Gastrocnemius medialis (tissue), 4 donors: ENCODE measurements at regions of chr6 and their contacts with region 1.

Region 1: GRCh38 chr6:41735427-41736356 is at the start of gene TFEB:
- DNase-seq: peak; percentile 92 to 93
- ATAC-seq: peak; percentile 43 to 51
- H3K4me3 ChIP-seq: peak within 1 kb of the TSS; percentile 76 to 97 (median 90)
- H3K27ac ChIP-seq: peak within 1 kb of the TSS; percentile 97 to 99 (median 98)
- H3K4me1 ChIP-seq: peaks cover 12 to 19% of the 10 kb centered on the region in 2 donors
- H3K27me3 ChIP-seq: no peaks in the 10 kb centered on the region
- CTCF ChIP-seq: peak; percentile 91 to 100 (median 100)
- POLR2A ChIP-seq: peak; percentile 94 to 97
- total RNA-seq, gene TFEB: 82.8 to 121 (median 93.3) TPM

Region 2: DNA sequence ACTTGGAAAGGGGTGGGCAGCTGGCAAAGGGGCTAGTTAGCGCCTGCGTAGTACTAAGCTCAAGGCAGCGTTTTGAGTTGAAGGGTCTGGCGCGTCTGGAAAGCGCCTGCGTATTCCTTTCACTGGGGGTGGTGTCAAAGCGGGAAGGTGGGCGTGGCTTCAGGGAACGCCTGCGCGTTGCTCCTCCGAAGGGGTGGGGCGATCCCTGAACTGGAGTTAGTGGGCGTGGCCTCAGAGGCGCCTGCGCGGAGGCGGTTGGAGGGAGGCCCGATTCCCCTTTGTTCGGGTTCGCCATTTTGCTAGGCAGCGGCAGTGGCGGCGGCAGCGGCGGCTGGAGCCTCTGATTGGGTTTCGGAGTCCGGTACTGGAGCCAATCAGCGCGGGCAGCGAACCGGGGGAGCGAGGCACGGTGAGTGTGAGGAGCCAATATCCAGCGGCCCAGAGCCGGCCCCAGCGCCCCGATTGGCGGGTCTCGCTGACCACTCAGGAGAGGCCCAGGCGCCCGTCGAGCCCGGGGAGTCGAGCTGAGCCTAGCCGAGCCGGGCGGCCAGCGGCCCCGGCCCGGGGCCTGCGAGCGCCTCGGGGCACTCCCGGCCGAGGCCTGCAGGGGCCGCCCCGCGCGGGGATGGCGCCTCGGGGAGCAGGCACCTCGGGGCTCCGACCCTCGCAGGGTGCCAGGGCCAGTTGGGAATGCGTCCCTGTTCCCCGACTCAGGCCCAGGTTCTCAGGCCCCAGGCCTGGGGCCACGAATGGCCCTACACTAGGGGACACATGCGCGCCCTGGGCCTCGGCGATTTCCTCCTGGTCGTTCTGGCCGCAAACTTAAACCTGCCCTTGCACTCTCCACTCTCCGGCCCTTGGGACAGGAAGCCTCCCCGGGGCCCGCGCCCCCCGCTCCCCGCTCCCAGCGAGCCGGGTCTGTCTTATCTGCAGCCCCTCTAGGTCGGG is 662.7 kb before region 1 on chr6 and contains the start of gene NFYA:
- in situ Hi-C with region 1: no loop called
- intact Hi-C with region 1: loop called (anchors 5 kb)
- DNase-seq: peak; percentile 99
- ATAC-seq: peak; percentile 66 to 67
- H3K4me3 ChIP-seq: peak within 1 kb of the TSS; percentile 75 to 93 (median 82)
- H3K27ac ChIP-seq: peak within 1 kb of the TSS; percentile 97 to 99 (median 98)
- H3K4me1 ChIP-seq: peaks cover 34 to 47% of the 10 kb centered on the region in 2 donors
- H3K27me3 ChIP-seq: no peaks in the 10 kb centered on the region
- CTCF ChIP-seq: peak in 4 of 5 experiments; percentile 49 to 82 (median 62)
- POLR2A ChIP-seq: peak; percentile 97 to 98
- total RNA-seq, gene NFYA: 7.2 to 11.6 (median 9.7) TPM

Region 3: DNA sequence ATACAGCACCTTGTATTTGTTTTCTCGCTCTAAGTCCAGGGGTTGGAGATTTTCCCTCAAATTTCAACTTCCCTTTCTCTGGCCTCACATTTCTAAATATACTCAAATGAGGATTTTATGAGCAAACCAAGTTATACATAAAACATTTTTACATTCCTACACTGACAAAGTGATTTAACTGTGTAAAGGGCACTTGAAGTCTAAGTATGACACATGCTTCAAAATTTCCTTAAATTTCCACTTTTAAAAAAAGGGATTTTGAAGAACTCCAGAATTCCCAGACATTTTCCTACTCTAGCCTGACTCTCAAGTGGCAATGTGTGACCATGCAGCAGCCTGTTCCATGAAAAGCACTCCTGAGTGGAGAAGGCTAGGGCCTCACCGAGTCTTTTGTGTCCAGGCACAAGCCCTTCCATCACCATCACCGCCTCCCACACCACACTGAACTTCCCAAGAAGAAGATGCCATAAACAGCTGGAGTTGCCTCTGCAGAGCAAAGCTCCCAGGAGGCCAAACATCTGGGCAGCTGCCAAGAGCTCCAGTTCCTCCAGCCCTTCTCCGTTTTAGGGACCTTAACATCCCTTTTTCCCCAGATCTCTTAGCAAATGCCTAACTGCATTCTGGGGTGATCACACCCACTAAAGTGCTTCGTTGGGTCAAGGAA is 331.4 kb before region 1 on chr6:
- in situ Hi-C with region 1: no loop called
- intact Hi-C with region 1: no loop called
- DNase-seq: no peak
- ATAC-seq: no peak
- H3K4me3 ChIP-seq: no peak overlapping the region
- H3K27ac ChIP-seq: no peak overlapping the region
- H3K4me1 ChIP-seq: no peaks in the 10 kb centered on the region
- H3K27me3 ChIP-seq: peaks cover 3 to 18% (median 11%) of the 10 kb centered on the region in 3 donors
- CTCF ChIP-seq: no peak
- POLR2A ChIP-seq: no peak

Region 4: GRCh38 chr6:41700463-41701347 is 35.0 kb before region 1 on chr6:
- in situ Hi-C with region 1: loop called in 1 of 4 experiments (anchors 5 kb)
- intact Hi-C with region 1: no loop called
- DNase-seq: no peak
- ATAC-seq: no peak
- H3K4me3 ChIP-seq: no peak overlapping the region
- H3K27ac ChIP-seq: peak overlapping the region in 3 of 4 donors; percentile 5 to 32 (median 13)
- H3K4me1 ChIP-seq: peaks cover 59 to 82% of the 10 kb centered on the region in 2 donors
- H3K27me3 ChIP-seq: no peaks in the 10 kb centered on the region
- CTCF ChIP-seq: no peak
- POLR2A ChIP-seq: no peak

Region 5: DNA sequence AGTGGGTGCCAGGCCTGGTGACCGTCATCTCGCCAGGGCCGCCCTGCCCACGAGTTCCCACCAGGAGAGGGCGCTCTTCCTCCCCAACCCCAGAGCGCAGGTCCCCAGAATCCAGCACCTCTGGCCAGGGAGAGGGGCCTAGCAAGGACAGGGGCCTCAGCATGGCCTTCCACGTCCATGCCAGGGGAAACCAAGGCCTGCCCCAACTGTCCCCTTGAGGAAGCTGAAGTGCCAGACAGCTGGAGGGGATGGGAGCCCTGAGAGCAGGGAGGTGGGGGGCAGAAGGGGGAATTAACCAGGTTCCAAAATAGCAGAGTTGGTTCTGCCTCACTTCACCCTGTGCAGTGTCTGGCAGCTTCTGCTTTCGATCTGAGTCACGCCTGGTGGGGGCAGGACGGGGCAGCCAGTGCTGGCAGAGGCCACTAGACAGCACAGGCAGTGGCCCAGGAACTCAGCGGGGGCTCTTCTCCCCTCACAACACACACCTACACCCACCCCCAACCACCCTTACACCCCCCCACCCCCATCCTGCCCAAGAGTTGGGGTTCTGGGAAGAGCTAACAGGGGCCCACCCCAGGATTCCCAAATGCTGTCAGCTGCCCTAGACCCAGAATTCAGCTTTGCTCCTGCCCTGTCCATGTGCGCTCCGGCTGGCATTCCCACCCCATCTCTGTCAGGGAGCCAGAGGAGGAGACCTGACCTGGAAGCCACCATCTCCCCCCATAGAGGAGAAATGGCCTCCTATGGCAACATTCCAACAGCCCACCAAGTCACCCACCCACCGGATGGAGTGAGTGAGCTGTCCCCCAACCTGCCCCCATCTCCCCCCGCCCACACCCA is 29.5 kb before region 1 on chr6:
- in situ Hi-C with region 1: loop called in 1 of 4 experiments (anchors 5 kb)
- intact Hi-C with region 1: loop called (anchors 1 kb)
- DNase-seq: peak; percentile 88 to 93
- ATAC-seq: peak; percentile 79 to 83
- H3K4me3 ChIP-seq: peak overlapping the region in 3 of 4 donors; percentile 13 to 30 (median 28)
- H3K27ac ChIP-seq: peak overlapping the region; percentile 94 to 98 (median 96)
- H3K4me1 ChIP-seq: peaks cover 90 to 93% of the 10 kb centered on the region in 2 donors
- H3K27me3 ChIP-seq: no peaks in the 10 kb centered on the region
- CTCF ChIP-seq: peak; percentile 89 to 98 (median 94)
- POLR2A ChIP-seq: peak; percentile 54 to 70

Region 6: GRCh38 chr6:41713161-41713649 is 22.5 kb before region 1 on chr6:
- in situ Hi-C with region 1: no loop called
- intact Hi-C with region 1: loop called (anchors 1 kb)
- DNase-seq: peak; percentile 84 to 93
- ATAC-seq: peak; percentile 53 to 63
- H3K4me3 ChIP-seq: peak overlapping the region in 1 of 4 donors; percentile 10
- H3K27ac ChIP-seq: peak overlapping the region; percentile 97 to 99 (median 98)
- H3K4me1 ChIP-seq: peaks cover 100% of the 10 kb centered on the region in 2 donors
- H3K27me3 ChIP-seq: no peaks in the 10 kb centered on the region
- CTCF ChIP-seq: no peak
- POLR2A ChIP-seq: peak in 1 of 2 donors; percentile 63

Region 7: GRCh38 chr6:41767156-41767833 is 31.6 kb after region 1 on chr6:
- in situ Hi-C with region 1: no loop called
- intact Hi-C with region 1: no loop called
- DNase-seq: no peak
- ATAC-seq: no peak
- H3K4me3 ChIP-seq: no peak overlapping the region
- H3K27ac ChIP-seq: no peak overlapping the region
- H3K4me1 ChIP-seq: no peaks in the 10 kb centered on the region
- H3K27me3 ChIP-seq: no peaks in the 10 kb centered on the region
- CTCF ChIP-seq: no peak
- POLR2A ChIP-seq: no peak

Region 8: DNA sequence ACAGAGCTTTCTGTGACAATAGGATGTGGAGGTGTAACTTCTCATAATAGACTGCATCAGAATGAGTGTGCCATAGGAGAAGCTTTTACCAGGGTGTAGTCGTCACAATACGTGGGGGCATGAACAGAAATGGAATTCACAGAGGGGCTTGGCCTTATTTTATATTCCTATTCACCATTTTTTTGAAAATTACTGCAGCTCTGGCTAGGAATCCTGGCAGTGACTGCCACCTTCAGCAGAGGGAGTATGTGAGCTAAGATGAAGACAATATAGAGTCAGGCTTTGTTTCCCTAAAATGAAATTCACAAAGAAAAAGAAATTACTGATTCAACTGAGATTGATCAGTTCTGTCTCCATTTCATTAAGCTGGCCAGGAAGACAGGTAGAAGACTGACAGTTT is 65.7 kb after region 1 on chr6:
- in situ Hi-C with region 1: no loop called
- intact Hi-C with region 1: no loop called
- DNase-seq: no peak
- ATAC-seq: no peak
- H3K4me3 ChIP-seq: no peak overlapping the region
- H3K27ac ChIP-seq: no peak overlapping the region
- H3K4me1 ChIP-seq: no peaks in the 10 kb centered on the region
- H3K27me3 ChIP-seq: no peaks in the 10 kb centered on the region
- CTCF ChIP-seq: no peak
- POLR2A ChIP-seq: no peak